ENCODE measurements at regions of chr16 and their contacts with region 1.

Region 1: GRCh38 chr16:27179500-27180072 is 23.7 kb upstream of the KDM8 start:
- DNase-seq: peak; percentile 83 to 95 (median 86)
- ATAC-seq: peak; percentile 99
- H3K4me3 ChIP-seq: no peak overlapping the region
- H3K4me3 Mint-ChIP-seq: no peak overlapping the region
- H3K27ac ChIP-seq: no peak overlapping the region
- H3K27ac Mint-ChIP-seq: peak overlapping the region; percentile 72
- H3K4me1 ChIP-seq: peaks cover 35% of the 10 kb centered on the region
- H3K4me1 Mint-ChIP-seq: peaks cover 55% of the 10 kb centered on the region
- H3K27me3 ChIP-seq: no peaks in the 10 kb centered on the region
- H3K27me3 Mint-ChIP-seq: no peaks in the 10 kb centered on the region
- CTCF ChIP-seq: peak; percentile 84

Region 2: GRCh38 chr16:27193302-27193990 is 13.9 kb after region 1 on chr16:
- CTCF ChIA-PET with region 1: interaction called, 51 read pairs
- POLR2A ChIA-PET with region 1: interaction called, 24 read pairs
- intact Hi-C with region 1: loop called in 1 of 2 experiments (anchors 2 kb)
- DNase-seq: no peak
- ATAC-seq: no peak
- H3K4me3 ChIP-seq: no peak overlapping the region
- H3K4me3 Mint-ChIP-seq: no peak overlapping the region
- H3K27ac ChIP-seq: no peak overlapping the region
- H3K27ac Mint-ChIP-seq: peak overlapping the region; percentile 95
- H3K4me1 ChIP-seq: peaks cover 50% of the 10 kb centered on the region
- H3K4me1 Mint-ChIP-seq: peaks cover 65% of the 10 kb centered on the region
- H3K27me3 ChIP-seq: no peaks in the 10 kb centered on the region
- H3K27me3 Mint-ChIP-seq: no peaks in the 10 kb centered on the region
- CTCF ChIP-seq: no peak

Region 3: DNA sequence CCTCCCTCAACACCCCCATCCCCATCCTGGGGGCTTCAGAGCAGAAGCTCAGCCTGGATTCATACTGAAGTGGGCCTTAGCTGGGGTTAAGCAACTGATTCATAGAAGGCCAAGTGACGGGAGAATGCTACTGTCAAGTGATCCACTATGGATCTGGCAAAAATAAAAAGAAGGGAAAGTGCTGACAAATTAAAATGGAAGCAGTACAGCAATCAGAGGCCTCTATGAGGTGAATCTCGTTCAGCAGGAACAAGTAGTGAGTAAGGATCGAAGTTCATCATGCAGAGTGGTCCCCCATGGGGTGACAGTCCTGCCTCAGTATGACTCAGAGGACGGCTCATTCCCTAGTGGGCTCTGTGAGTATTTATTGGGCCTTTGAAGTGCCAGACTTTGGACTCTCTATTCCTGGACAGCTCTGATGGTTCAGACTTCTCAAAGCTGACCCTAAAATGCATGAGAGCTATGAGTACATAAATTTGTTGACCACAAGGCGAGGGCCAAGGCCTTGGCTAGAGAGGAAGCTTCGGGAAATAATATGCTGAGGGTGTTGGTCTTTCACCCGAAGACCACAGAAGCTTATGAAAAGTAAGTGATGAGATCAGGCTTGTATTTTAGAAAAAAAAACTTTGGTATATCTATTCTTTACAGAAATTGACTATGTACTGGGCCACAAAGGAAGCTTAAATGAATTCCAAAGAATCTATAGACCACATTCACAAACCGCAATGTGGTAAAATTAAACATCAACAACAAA is 94.3 kb after region 1 on chr16:
- CTCF ChIA-PET with region 1: interaction called, 10 read pairs
- POLR2A ChIA-PET with region 1: no interaction called
- intact Hi-C with region 1: no loop called
- DNase-seq: peak in 4 of 14 experiments; percentile 28 to 57 (median 50)
- ATAC-seq: peak; percentile 42
- H3K4me3 ChIP-seq: peak overlapping the region; percentile 9
- H3K4me3 Mint-ChIP-seq: peak overlapping the region; percentile 70
- H3K27ac ChIP-seq: no peak overlapping the region
- H3K27ac Mint-ChIP-seq: peak overlapping the region; percentile 77
- H3K4me1 ChIP-seq: peaks cover 38% of the 10 kb centered on the region
- H3K4me1 Mint-ChIP-seq: peaks cover 53% of the 10 kb centered on the region
- H3K27me3 ChIP-seq: no peaks in the 10 kb centered on the region
- H3K27me3 Mint-ChIP-seq: no peaks in the 10 kb centered on the region
- CTCF ChIP-seq: no peak

Region 4: GRCh38 chr16:27318392-27319226 is 139.0 kb after region 1 on chr16:
- CTCF ChIA-PET with region 1: interaction called, 10 read pairs
- POLR2A ChIA-PET with region 1: no interaction called
- intact Hi-C with region 1: loop called (anchors 2 to 5 kb)
- DNase-seq: peak; percentile 20 to 75 (median 52)
- ATAC-seq: peak; percentile 70
- H3K4me3 ChIP-seq: peak overlapping the region; percentile 91
- H3K4me3 Mint-ChIP-seq: peak overlapping the region; percentile 86
- H3K27ac ChIP-seq: peak overlapping the region; percentile 70 to 94
- H3K27ac Mint-ChIP-seq: peak overlapping the region; percentile 89
- H3K4me1 ChIP-seq: peaks cover 87% of the 10 kb centered on the region
- H3K4me1 Mint-ChIP-seq: peaks cover 86% of the 10 kb centered on the region
- H3K27me3 ChIP-seq: no peaks in the 10 kb centered on the region
- H3K27me3 Mint-ChIP-seq: no peaks in the 10 kb centered on the region
- CTCF ChIP-seq: no peak

Region 5: GRCh38 chr16:27461483-27462171 is 282.0 kb after region 1 on chr16:
- CTCF ChIA-PET with region 1: interaction called, 4 read pairs
- POLR2A ChIA-PET with region 1: interaction called, 5 read pairs
- intact Hi-C with region 1: loop called (anchors 1 kb)
- DNase-seq: no peak
- ATAC-seq: no peak
- H3K4me3 ChIP-seq: no peak overlapping the region
- H3K4me3 Mint-ChIP-seq: no peak overlapping the region
- H3K27ac ChIP-seq: no peak overlapping the region
- H3K27ac Mint-ChIP-seq: no peak overlapping the region
- H3K4me1 ChIP-seq: peaks cover 68% of the 10 kb centered on the region
- H3K4me1 Mint-ChIP-seq: peaks cover 48% of the 10 kb centered on the region
- H3K27me3 ChIP-seq: no peaks in the 10 kb centered on the region
- H3K27me3 Mint-ChIP-seq: no peaks in the 10 kb centered on the region
- CTCF ChIP-seq: no peak

Measured in CD4-positive, alpha-beta T cell (primary cell).